ENCODE measurements at regions of chr3 and their contacts with region 1.

Region 1: DNA sequence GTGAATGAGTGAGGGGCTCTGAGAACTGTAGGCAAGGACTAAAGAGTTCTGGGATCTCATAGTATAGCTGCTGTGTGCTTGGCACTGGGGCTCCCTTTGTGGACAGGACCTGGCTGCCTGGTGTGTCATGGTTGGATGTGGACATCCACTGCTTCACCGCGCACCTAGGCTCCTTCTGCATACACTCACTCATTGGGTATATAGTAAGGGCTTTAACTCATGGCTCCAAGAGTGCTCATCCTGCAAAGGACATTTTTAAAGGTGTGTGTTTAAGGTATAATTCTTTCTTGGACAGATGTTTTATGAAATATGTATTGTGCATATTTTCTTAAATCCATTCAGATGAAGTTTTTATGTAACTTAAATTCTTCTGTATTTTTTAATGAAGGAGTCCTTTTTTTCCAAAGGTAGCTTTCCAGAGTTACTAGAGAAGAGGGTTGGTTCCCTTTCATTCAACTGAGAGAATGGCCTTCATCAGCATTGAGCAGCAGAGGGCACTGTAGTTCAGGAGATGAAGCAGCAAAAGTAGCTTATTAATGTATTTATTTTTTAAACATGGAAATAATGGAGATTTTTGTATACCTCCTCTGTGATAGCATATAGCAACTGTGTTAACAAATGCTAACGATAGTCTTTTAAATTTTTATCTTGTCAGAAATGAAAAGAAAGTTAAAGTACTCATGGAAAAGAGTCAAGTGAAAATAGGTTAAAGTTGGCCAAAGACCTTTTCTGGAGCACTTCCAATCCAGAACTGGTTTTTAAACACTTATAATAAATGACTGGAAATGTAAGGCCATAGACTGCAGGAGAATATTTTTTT is 25.2 kb downstream of the OXNAD1 start:
- DNase-seq: peak in 1 of 2 experiments; percentile 26
- H3K4me3 ChIP-seq: no peak overlapping the region
- H3K27ac ChIP-seq: no peak overlapping the region
- H3K4me1 ChIP-seq: no peaks in the 10 kb centered on the region
- H3K27me3 ChIP-seq: no peaks in the 10 kb centered on the region
- CTCF ChIP-seq: peak; percentile 91

Region 2: DNA sequence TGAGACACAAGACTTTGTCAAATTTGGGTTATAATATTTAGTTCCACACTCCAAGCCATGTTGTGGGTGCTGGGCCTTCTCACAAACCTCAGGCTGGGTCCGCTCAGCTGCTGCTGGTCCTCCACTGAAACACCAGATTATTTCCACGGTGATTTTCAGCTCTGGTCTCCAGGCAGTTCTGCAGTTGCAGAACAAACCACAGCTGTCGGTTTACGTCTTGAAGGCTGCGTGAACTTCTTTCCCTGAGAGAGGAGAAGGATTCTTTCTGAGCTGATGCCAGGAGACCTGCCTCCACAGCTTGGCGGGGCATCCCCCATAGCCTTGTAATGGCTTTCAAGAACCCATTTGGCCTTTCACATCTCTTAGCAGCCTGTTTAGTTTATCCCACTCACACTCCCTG is 99.5 kb before region 1 on chr3:
- CTCF ChIA-PET with region 1: no interaction called
- POLR2A ChIA-PET with region 1: no interaction called
- intact Hi-C with region 1: no loop called
- DNase-seq: no peak
- H3K4me3 ChIP-seq: no peak overlapping the region
- H3K27ac ChIP-seq: no peak overlapping the region
- H3K4me1 ChIP-seq: no peaks in the 10 kb centered on the region
- H3K27me3 ChIP-seq: 0 out of 2 replicates have a peak, but pooled peaks cover 4% of the 10 kb centered on the region
- CTCF ChIP-seq: no peak

Region 3: GRCh38 chr3:16550676-16551341 is 260.6 kb after region 1 on chr3:
- CTCF ChIA-PET with region 1: interaction called, 4 read pairs
- POLR2A ChIA-PET with region 1: no interaction called
- intact Hi-C with region 1: loop called (anchors 1 kb)
- DNase-seq: peak; percentile 61 to 75
- H3K4me3 ChIP-seq: no peak overlapping the region
- H3K27ac ChIP-seq: no peak overlapping the region
- H3K4me1 ChIP-seq: no peaks in the 10 kb centered on the region
- H3K27me3 ChIP-seq: no peaks in the 10 kb centered on the region
- CTCF ChIP-seq: peak; percentile 89

Region 4: DNA sequence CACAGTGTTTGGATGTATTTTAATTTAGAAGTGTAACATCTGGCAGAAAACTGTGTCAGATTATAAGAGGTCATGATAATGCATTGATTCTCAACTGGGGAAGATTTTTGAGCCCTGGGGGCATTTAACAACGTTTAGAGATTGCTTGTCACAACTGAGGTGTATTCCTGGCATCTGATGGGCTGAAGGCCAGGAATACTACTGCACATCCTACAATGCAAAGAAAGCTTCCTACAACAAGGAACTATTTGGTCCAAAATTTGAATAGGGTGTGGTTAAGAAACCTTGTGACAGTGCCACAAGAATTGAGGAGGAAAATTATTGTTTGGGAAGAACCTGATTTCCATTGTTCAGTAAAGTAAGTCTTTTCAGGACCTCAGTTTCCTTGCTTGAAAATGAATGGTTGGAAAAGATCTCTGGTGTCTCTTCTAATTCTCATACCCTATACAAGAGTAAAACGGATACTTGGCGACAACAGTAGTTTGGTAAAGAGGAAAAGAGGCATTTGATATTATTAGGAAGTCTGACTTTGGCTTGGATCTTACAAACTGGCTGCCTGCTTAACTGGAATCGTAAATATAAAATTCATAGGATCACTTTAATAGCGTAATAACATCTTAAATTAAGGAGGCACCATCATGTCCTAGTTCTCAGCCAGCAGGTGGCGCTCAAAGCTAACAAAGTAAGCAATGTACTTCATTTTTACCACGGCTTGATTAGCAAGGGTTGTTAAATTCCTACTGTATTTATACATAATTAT is 310.7 kb after region 1 on chr3:
- CTCF ChIA-PET with region 1: no interaction called
- POLR2A ChIA-PET with region 1: no interaction called
- intact Hi-C with region 1: loop called (anchors 1 kb)
- DNase-seq: peak; percentile 41 to 60
- H3K4me3 ChIP-seq: no peak overlapping the region
- H3K27ac ChIP-seq: no peak overlapping the region
- H3K4me1 ChIP-seq: peaks cover 8% of the 10 kb centered on the region
- H3K27me3 ChIP-seq: no peaks in the 10 kb centered on the region
- CTCF ChIP-seq: peak; percentile 97

Region 5: DNA sequence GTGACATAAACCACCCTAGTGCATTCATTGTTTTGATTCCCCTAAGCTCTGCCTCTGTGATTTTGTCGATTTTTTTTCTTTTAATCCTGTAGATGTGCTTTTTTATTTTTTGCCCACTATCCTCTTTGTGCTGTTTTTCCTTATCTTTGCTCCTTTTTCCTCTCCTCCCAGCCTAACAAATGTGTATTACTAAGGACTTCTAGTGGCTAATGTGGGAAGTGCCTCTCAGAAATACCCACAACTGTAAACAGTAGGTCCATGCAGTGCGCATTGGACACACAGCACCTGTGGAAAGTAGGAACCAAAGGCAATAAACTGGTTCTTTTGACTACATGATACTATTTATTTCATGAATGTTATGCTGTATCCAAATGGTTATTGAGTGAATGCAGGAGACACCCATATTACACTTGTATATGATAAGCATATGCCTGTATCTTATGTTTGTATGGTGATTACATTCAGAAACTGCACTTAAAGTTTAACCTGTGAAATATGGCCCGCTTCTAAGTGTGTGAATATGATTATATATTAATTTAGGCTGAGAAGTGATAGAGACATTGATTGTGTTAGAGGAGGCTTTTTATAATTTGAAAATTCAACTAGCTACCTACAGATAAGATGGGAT is 742.3 kb after region 1 on chr3:
- CTCF ChIA-PET with region 1: no interaction called
- POLR2A ChIA-PET with region 1: no interaction called
- intact Hi-C with region 1: loop called (anchors 10 kb)
- DNase-seq: no peak
- H3K4me3 ChIP-seq: no peak overlapping the region
- H3K27ac ChIP-seq: no peak overlapping the region
- H3K4me1 ChIP-seq: peaks cover 6% of the 10 kb centered on the region
- H3K27me3 ChIP-seq: no peaks in the 10 kb centered on the region
- CTCF ChIP-seq: peak; percentile 71

Region 6: GRCh38 chr3:17233398-17233800 is 943.2 kb after region 1 on chr3:
- CTCF ChIA-PET with region 1: no interaction called
- POLR2A ChIA-PET with region 1: no interaction called
- intact Hi-C with region 1: loop called (anchors 5 kb)
- DNase-seq: peak; percentile 6 to 69
- H3K4me3 ChIP-seq: no peak overlapping the region
- H3K27ac ChIP-seq: no peak overlapping the region
- H3K4me1 ChIP-seq: peaks cover 14% of the 10 kb centered on the region
- H3K27me3 ChIP-seq: no peaks in the 10 kb centered on the region
- CTCF ChIP-seq: peak; percentile 89

Region 7: GRCh38 chr3:17412950-17413530 is 1122.8 kb after region 1 on chr3:
- CTCF ChIA-PET with region 1: no interaction called
- POLR2A ChIA-PET with region 1: no interaction called
- intact Hi-C with region 1: loop called (anchors 10 kb)
- DNase-seq: peak in 1 of 2 experiments; percentile 8
- H3K4me3 ChIP-seq: no peak overlapping the region
- H3K27ac ChIP-seq: no peak overlapping the region
- H3K4me1 ChIP-seq: no peaks in the 10 kb centered on the region
- H3K27me3 ChIP-seq: no peaks in the 10 kb centered on the region
- CTCF ChIP-seq: peak; percentile 91